HepG2 (cell line): ENCODE measurements at regions of chr1 and their contacts with region 1.

Region 1: GRCh38 chr1:77683160-77684148 is 996 bp upstream of the ZZZ3 start:
- DNase-seq: peak; percentile 85
- ATAC-seq: peak; percentile 89
- H3K4me3 ChIP-seq: peak overlapping the region; percentile 86 to 98 (median 90)
- H3K27ac ChIP-seq: peak overlapping the region; percentile 100
- H3K4me1 ChIP-seq: peaks cover 38% of the 10 kb centered on the region
- H3K27me3 ChIP-seq: no peaks in the 10 kb centered on the region; a peak in 1 of 5 replicates
- CTCF ChIP-seq: peak; percentile 89
- EP300 ChIP-seq: no peak; a peak in 1 of 4 replicates
- POLR2A ChIP-seq: peak; percentile 73 to 78
- RAD21 ChIP-seq: peak; percentile 94

Region 2: GRCh38 chr1:76901158-76901767 is 782.2 kb before region 1 on chr1:
- CTCF ChIA-PET with region 1: no interaction called
- POLR2A ChIA-PET with region 1: no interaction called
- in situ Hi-C with region 1: no loop called
- intact Hi-C with region 1: no loop called
- DNase-seq: peak; percentile 46
- ATAC-seq: peak; percentile 93
- H3K4me3 ChIP-seq: no peak overlapping the region
- H3K27ac ChIP-seq: no peak overlapping the region
- H3K4me1 ChIP-seq: no peaks in the 10 kb centered on the region
- H3K27me3 ChIP-seq: no peaks in the 10 kb centered on the region; a peak in 1 of 5 replicates
- CTCF ChIP-seq: peak; percentile 76
- EP300 ChIP-seq: no peak
- POLR2A ChIP-seq: no peak
- RAD21 ChIP-seq: 0 out of 2 replicates have a peak, but pooled peaks have one; percentile 18

Region 3: DNA sequence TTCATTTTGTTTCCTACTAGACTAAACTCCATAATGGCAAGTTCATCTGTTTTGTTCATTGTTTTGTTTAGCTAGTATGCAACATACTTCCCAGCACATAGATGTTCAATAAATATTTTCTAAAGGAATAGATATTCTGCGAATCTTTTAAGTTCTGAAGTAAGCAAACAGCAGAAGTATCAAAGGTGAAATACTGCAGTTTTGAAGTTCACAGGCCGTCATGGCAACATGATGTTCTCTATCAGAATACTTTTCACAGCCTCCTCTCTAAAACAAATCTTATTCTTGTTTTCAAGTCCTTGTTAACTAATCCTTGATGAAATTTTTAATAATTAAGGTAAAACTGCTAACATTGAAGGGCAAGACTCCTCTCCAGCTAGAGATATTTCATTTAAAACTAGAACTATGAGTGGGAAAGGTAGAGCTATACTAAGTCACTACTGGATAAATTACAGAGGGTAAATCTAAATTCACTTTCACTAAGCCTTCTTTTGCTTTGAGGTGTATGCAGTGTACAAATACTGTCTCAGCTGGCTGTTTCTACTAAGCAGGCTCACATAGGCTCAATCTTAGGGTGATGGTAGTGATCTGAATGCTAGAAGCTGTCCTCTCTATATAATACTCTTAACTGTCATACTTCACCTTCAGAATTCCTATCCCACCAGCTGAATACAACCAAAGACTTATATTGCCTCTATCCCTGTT is 97.7 kb before region 1 on chr1:
- CTCF ChIA-PET with region 1: no interaction called
- POLR2A ChIA-PET with region 1: no interaction called
- in situ Hi-C with region 1: no loop called
- intact Hi-C with region 1: loop called (anchors 5 kb)
- DNase-seq: peak; percentile 7
- ATAC-seq: peak; percentile 80
- H3K4me3 ChIP-seq: no peak overlapping the region
- H3K27ac ChIP-seq: peak overlapping the region; percentile 59
- H3K4me1 ChIP-seq: peaks cover 22% of the 10 kb centered on the region
- H3K27me3 ChIP-seq: no peaks in the 10 kb centered on the region
- CTCF ChIP-seq: no peak
- EP300 ChIP-seq: no peak
- POLR2A ChIP-seq: no peak
- RAD21 ChIP-seq: no peak

Region 4: GRCh38 chr1:77642196-77642595 is 41.3 kb before region 1 on chr1:
- CTCF ChIA-PET with region 1: no interaction called
- POLR2A ChIA-PET with region 1: no interaction called
- in situ Hi-C with region 1: no loop called
- intact Hi-C with region 1: loop called (anchors 5 kb)
- DNase-seq: no peak
- ATAC-seq: no peak
- H3K4me3 ChIP-seq: no peak overlapping the region
- H3K27ac ChIP-seq: no peak overlapping the region
- H3K4me1 ChIP-seq: no peaks in the 10 kb centered on the region
- H3K27me3 ChIP-seq: no peaks in the 10 kb centered on the region
- CTCF ChIP-seq: no peak
- EP300 ChIP-seq: no peak
- POLR2A ChIP-seq: no peak
- RAD21 ChIP-seq: no peak

Region 5: GRCh38 chr1:77655431-77655974 is 28.0 kb before region 1 on chr1:
- CTCF ChIA-PET with region 1: no interaction called
- POLR2A ChIA-PET with region 1: interaction called, 10 read pairs
- in situ Hi-C with region 1: no loop called
- intact Hi-C with region 1: no loop called
- DNase-seq: peak; percentile 76
- ATAC-seq: peak; percentile 87
- H3K4me3 ChIP-seq: no peak overlapping the region
- H3K27ac ChIP-seq: peak overlapping the region; percentile 42
- H3K4me1 ChIP-seq: peaks cover 37% of the 10 kb centered on the region
- H3K27me3 ChIP-seq: no peaks in the 10 kb centered on the region
- CTCF ChIP-seq: no peak
- EP300 ChIP-seq: peak in 1 of 2 experiments; percentile 52; a peak in 1 of 4 replicates
- POLR2A ChIP-seq: no peak
- RAD21 ChIP-seq: no peak

Region 6: GRCh38 chr1:77671836-77672235 is 11.6 kb before region 1 on chr1:
- CTCF ChIA-PET with region 1: no interaction called
- POLR2A ChIA-PET with region 1: no interaction called
- in situ Hi-C with region 1: no loop called
- intact Hi-C with region 1: no loop called
- DNase-seq: no peak
- ATAC-seq: no peak
- H3K4me3 ChIP-seq: no peak overlapping the region
- H3K27ac ChIP-seq: no peak overlapping the region
- H3K4me1 ChIP-seq: peaks cover 34% of the 10 kb centered on the region
- H3K27me3 ChIP-seq: no peaks in the 10 kb centered on the region
- CTCF ChIP-seq: no peak
- EP300 ChIP-seq: no peak
- POLR2A ChIP-seq: no peak
- RAD21 ChIP-seq: no peak

Region 7: GRCh38 chr1:77709727-77710126 is 26.3 kb after region 1 on chr1:
- CTCF ChIA-PET with region 1: no interaction called
- POLR2A ChIA-PET with region 1: no interaction called
- in situ Hi-C with region 1: no loop called
- intact Hi-C with region 1: no loop called
- DNase-seq: no peak
- ATAC-seq: no peak
- H3K4me3 ChIP-seq: no peak overlapping the region
- H3K27ac ChIP-seq: no peak overlapping the region
- H3K4me1 ChIP-seq: no peaks in the 10 kb centered on the region
- H3K27me3 ChIP-seq: no peaks in the 10 kb centered on the region
- CTCF ChIP-seq: no peak
- EP300 ChIP-seq: no peak
- POLR2A ChIP-seq: no peak
- RAD21 ChIP-seq: no peak

Region 8: DNA sequence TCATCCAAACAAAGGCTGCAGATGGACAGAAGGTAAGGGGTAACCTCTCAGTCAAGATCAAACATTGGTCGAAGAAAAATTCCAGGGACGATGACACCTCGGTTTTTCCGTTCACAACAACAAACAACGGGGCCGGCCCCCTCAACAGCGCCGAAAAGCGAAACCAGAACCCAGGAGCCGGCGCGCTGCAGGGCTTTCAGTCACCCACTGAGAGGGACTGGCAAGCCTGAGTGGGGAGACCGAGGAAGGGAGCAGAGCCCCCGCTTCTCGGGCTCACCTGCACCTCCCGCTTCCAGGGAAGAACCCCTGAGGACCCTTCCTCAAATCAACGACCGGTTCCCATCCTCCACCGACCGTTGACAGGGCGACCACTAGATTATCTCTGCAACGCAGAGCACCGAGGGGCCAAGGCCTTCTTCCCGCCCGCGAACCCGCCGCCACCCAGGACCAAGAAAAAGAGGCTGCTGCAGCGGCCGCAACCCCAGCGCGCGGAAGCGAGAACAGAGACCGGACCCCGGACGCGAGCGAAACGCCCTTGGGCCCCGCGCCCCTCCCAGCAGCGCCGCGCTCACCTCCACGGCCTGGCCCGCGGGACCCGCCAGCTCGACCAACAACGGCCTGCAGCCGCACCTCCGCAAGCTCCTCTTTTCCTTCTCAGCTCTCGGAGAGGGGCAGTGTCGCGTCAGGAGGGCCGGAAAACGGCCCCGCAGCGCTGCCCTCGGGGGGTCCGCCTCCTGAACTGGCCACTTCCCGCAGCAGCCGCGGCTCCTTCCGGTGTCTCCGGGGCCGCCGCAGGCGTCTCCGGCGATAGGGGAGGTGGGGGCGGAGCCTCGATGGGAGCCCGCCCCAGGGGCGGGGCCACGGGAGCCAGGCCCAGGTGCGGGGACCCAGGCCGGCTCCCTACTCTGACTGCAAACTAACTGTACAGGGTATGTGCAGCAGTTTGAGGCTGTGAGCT is 75.9 kb after region 1 on chr1 and contains the start of gene USP33:
- CTCF ChIA-PET with region 1: no interaction called
- POLR2A ChIA-PET with region 1: interaction called, 5 read pairs
- in situ Hi-C with region 1: no loop called
- intact Hi-C with region 1: loop called (anchors 5 kb)
- DNase-seq: peak; percentile 72
- ATAC-seq: peak; percentile 96
- H3K4me3 ChIP-seq: peak within 1 kb of the TSS; percentile 92 to 95 (median 94)
- H3K27ac ChIP-seq: peak within 1 kb of the TSS; percentile 91
- H3K4me1 ChIP-seq: peaks cover 29% of the 10 kb centered on the region
- H3K27me3 ChIP-seq: no peaks in the 10 kb centered on the region; a peak in 1 of 5 replicates
- CTCF ChIP-seq: 0 out of 2 replicates have a peak, but pooled peaks have one; percentile 10
- EP300 ChIP-seq: no peak
- POLR2A ChIP-seq: peak; percentile 75 to 85
- RAD21 ChIP-seq: no peak
- total RNA-seq, gene USP33: 48.2 and 49.1 TPM in 2 replicates